CD8-positive, alpha-beta T cell (primary cell): ENCODE measurements at regions of chr6 and their contacts with region 1.

Region 1: GRCh38 chr6:166627033-166627874 is at the start of gene RPS6KA2:
- DNase-seq: peak; percentile 99 to 100 (median 100)
- ATAC-seq: peak; percentile 91
- H3K4me3 ChIP-seq: peak within 1 kb of the TSS; percentile 70 to 80
- H3K4me3 Mint-ChIP-seq: peak within 1 kb of the TSS; percentile 94
- H3K27ac ChIP-seq: peak within 1 kb of the TSS; percentile 32 to 54
- H3K27ac Mint-ChIP-seq: peak within 1 kb of the TSS; percentile 84
- H3K4me1 ChIP-seq: peaks cover 17% of the 10 kb centered on the region
- H3K4me1 Mint-ChIP-seq: peaks cover 17% of the 10 kb centered on the region
- H3K27me3 ChIP-seq: peaks cover 0 to 4% of the 10 kb centered on the region in 2 experiments
- H3K27me3 Mint-ChIP-seq: peaks cover 36% of the 10 kb centered on the region
- CTCF ChIP-seq: no peak
- total RNA-seq, gene RPS6KA2: 2.2 TPM

Region 2: DNA sequence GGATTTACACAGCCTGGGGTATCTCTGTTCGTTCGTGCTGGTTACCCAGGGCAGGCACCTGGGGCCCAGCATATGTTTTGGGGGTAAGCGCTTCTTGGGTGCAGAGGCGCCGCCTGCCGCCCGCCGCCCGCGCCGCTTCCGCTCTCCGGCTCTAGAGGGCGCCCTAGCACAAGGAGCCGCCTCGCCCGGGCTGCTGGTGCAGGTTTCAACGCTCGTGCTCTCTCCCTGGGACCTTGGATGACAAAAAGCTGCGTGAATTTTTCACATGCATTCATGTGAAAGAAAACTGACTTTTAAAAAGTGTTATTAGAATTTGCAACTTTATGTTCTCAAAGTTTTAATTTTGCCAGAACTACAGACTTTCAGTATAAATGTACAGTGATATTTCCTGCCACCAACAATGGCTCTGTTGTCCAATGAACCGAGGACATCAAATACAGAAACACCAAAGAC is 351.5 kb before region 1 on chr6:
- CTCF ChIA-PET with region 1: no interaction called
- POLR2A ChIA-PET with region 1: no interaction called
- intact Hi-C with region 1: loop called in 1 of 2 experiments (anchors 10 kb)
- DNase-seq: peak; percentile 74 to 90 (median 82)
- ATAC-seq: peak; percentile 97
- H3K4me3 ChIP-seq: no peak overlapping the region
- H3K4me3 Mint-ChIP-seq: no peak overlapping the region
- H3K27ac ChIP-seq: no peak overlapping the region
- H3K27ac Mint-ChIP-seq: no peak overlapping the region
- H3K4me1 ChIP-seq: peaks cover 4% of the 10 kb centered on the region
- H3K4me1 Mint-ChIP-seq: peaks cover 6% of the 10 kb centered on the region
- H3K27me3 ChIP-seq: peaks cover 0 to 3% of the 10 kb centered on the region in 2 experiments
- H3K27me3 Mint-ChIP-seq: peaks cover 2% of the 10 kb centered on the region
- CTCF ChIP-seq: peak; percentile 100

Region 3: GRCh38 chr6:166419286-166419685 is 208.0 kb before region 1 on chr6:
- CTCF ChIA-PET with region 1: no interaction called
- POLR2A ChIA-PET with region 1: interaction called, 3 read pairs
- intact Hi-C with region 1: loop called (anchors 1 to 2 kb)
- DNase-seq: peak in 8 of 9 experiments; percentile 50 to 82 (median 72)
- ATAC-seq: peak; percentile 35
- H3K4me3 ChIP-seq: no peak overlapping the region
- H3K4me3 Mint-ChIP-seq: peak overlapping the region; percentile 50
- H3K27ac ChIP-seq: peak overlapping the region; percentile 15 to 58
- H3K27ac Mint-ChIP-seq: peak overlapping the region; percentile 92
- H3K4me1 ChIP-seq: peaks cover 62% of the 10 kb centered on the region
- H3K4me1 Mint-ChIP-seq: peaks cover 75% of the 10 kb centered on the region
- H3K27me3 ChIP-seq: no peaks in the 10 kb centered on the region
- H3K27me3 Mint-ChIP-seq: no peaks in the 10 kb centered on the region
- CTCF ChIP-seq: no peak

Region 4: DNA sequence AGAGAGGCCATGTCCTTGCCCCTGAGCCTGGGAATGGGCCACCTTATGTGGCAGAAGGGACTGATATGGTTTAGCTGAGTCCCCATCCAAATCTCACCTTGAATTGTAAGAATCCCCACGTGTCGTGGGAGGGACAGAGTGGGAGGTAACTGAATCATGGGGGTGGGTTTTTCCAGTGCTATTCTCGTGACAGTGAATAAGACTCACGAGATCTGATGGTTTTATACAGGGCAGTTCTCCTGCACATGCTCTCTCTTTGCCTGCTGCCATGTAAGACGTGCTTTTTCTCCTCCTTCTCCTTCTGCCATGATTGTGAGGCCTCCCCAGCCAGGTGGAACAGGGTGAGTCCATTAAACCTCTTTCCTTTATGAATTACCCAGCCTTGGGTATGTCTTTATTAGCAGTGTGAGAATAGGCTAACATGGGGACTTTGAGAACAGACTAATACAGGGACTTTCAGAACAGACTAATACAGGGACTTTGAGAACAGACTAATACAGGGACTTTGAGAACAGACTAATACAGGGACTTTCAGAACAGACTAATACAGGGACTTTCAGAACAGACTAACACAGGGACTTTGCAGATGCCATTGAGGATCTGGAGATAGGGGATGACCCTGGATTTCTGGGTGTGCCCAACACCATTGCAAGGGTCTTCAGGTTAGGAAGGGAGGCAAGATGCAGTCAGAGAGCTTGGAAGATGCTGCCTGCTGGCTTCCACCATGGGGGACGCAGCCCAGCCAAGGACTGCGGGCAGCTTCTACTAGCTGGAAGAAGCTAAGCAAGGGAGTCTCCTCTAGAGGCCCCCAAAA is 127.7 kb before region 1 on chr6:
- CTCF ChIA-PET with region 1: no interaction called
- POLR2A ChIA-PET with region 1: no interaction called
- intact Hi-C with region 1: no loop called
- DNase-seq: no peak
- ATAC-seq: no peak
- H3K4me3 ChIP-seq: no peak overlapping the region
- H3K4me3 Mint-ChIP-seq: no peak overlapping the region
- H3K27ac ChIP-seq: no peak overlapping the region
- H3K27ac Mint-ChIP-seq: no peak overlapping the region
- H3K4me1 ChIP-seq: no peaks in the 10 kb centered on the region
- H3K4me1 Mint-ChIP-seq: peaks cover 6% of the 10 kb centered on the region
- H3K27me3 ChIP-seq: no peaks in the 10 kb centered on the region
- H3K27me3 Mint-ChIP-seq: no peaks in the 10 kb centered on the region
- CTCF ChIP-seq: no peak

Region 5: GRCh38 chr6:166540631-166541331 is 86.5 kb before region 1 on chr6:
- CTCF ChIA-PET with region 1: no interaction called
- POLR2A ChIA-PET with region 1: interaction called, 3 read pairs
- intact Hi-C with region 1: loop called in 1 of 2 experiments (anchors 1 kb)
- DNase-seq: peak; percentile 15 to 87 (median 47)
- ATAC-seq: peak; percentile 92
- H3K4me3 ChIP-seq: peak overlapping the region in 1 of 2 experiments; percentile 37
- H3K4me3 Mint-ChIP-seq: peak overlapping the region; percentile 78
- H3K27ac ChIP-seq: peak overlapping the region; percentile 45 to 61
- H3K27ac Mint-ChIP-seq: peak overlapping the region; percentile 84
- H3K4me1 ChIP-seq: peaks cover 9% of the 10 kb centered on the region
- H3K4me1 Mint-ChIP-seq: peaks cover 28% of the 10 kb centered on the region
- H3K27me3 ChIP-seq: no peaks in the 10 kb centered on the region
- H3K27me3 Mint-ChIP-seq: no peaks in the 10 kb centered on the region
- CTCF ChIP-seq: no peak

Region 6: GRCh38 chr6:166707045-166707444 is 79.8 kb after region 1 on chr6:
- CTCF ChIA-PET with region 1: no interaction called
- POLR2A ChIA-PET with region 1: no interaction called
- intact Hi-C with region 1: no loop called
- DNase-seq: peak in 1 of 9 experiments; percentile 13
- ATAC-seq: no peak
- H3K4me3 ChIP-seq: no peak overlapping the region
- H3K4me3 Mint-ChIP-seq: no peak overlapping the region
- H3K27ac ChIP-seq: no peak overlapping the region
- H3K27ac Mint-ChIP-seq: no peak overlapping the region
- H3K4me1 ChIP-seq: no peaks in the 10 kb centered on the region
- H3K4me1 Mint-ChIP-seq: no peaks in the 10 kb centered on the region
- H3K27me3 ChIP-seq: no peaks in the 10 kb centered on the region
- H3K27me3 Mint-ChIP-seq: peaks cover 10% of the 10 kb centered on the region
- CTCF ChIP-seq: no peak

Region 7: DNA sequence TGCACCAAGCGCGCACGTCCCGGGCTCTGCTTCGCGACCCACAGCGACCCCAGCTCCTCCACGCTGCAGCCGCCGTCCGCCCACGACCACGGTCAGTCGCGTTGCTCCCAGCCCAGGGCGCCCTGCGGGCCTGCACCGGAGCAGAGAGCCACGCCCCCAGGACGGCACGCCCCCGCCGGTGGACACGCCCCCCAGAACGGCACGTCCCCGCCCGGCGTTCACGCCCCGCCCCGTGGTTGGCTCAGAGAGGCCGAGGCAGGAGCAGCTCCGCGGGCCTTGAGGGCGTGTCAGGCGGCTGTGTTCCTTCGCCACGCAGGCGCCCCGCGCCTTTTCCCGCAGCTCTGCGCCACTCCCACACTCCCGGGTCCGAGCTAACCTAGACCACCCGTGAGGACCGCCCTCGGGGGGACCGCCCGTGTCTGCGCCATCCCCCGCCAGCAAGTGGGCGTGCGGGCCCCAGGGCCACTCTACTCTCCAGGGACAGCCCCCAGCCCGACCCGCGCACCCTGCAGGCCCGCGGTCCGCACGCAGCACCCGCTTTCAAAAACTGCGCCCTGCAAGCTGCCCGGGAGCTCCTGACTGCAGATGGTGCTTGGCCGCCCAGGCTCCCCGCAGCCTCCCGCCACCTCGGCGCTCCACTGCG is 329.3 kb after region 1 on chr6 and contains the start of gene RNASET2:
- CTCF ChIA-PET with region 1: no interaction called
- POLR2A ChIA-PET with region 1: no interaction called
- intact Hi-C with region 1: loop called (anchors 1 to 2 kb)
- DNase-seq: peak; percentile 96 to 100 (median 99)
- ATAC-seq: peak; percentile 87
- H3K4me3 ChIP-seq: peak within 1 kb of the TSS; percentile 74 to 75
- H3K4me3 Mint-ChIP-seq: peak within 1 kb of the TSS; percentile 93
- H3K27ac ChIP-seq: peak within 1 kb of the TSS; percentile 81 to 86
- H3K27ac Mint-ChIP-seq: peak within 1 kb of the TSS; percentile 98
- H3K4me1 ChIP-seq: peaks cover 68% of the 10 kb centered on the region
- H3K4me1 Mint-ChIP-seq: peaks cover 70% of the 10 kb centered on the region
- H3K27me3 ChIP-seq: no peaks in the 10 kb centered on the region
- H3K27me3 Mint-ChIP-seq: no peaks in the 10 kb centered on the region
- CTCF ChIP-seq: no peak
- total RNA-seq, gene RNASET2: 93.1 to 98.9 TPM

Region 8: DNA sequence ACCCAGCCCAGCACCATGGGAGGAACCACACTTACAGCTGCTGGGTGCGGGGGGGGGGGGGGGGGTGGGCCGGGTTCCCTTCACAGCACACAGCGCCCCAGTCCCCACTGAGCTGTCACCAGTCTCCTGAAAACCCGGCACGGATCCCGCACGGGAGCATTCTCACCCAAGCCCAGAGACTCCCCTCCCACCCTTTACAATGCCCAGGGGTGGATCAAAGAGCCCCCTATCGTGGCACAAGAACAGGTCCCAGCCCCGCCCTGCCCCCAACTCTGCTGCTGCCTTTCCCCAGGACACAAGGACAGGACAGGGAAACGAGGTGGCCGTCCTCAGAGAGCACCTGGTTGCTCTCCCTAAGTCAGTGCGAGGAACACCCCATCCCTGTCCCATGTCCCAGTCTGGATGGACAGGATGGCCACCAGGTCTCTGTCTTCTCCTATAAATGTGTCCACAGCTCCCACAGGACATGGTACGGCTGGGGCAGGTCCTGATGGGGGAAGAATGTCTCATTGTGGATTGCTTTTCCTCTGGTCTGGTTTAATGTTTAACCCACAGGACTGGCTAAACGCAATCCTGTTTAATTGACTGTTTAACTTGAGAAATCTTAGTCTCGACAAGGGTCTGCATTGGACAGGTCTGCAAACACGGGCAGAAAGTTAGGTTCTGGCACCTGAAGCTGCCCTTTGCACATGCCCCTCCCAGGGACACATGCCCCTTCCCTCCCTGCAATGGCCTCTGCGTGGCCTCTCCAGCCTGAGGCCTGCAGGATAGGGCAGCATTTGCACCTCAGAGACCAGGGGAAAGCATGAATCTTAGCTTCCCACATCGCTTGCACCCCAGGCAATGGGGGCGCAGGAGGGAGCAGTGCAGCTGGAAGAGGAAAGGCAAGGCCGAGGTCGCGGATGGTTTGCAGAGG is 1647.0 kb after region 1 on chr6:
- CTCF ChIA-PET with region 1: no interaction called
- POLR2A ChIA-PET with region 1: no interaction called
- intact Hi-C with region 1: no loop called
- DNase-seq: no peak
- ATAC-seq: no peak
- H3K4me3 ChIP-seq: no peak overlapping the region
- H3K4me3 Mint-ChIP-seq: no peak overlapping the region
- H3K27ac ChIP-seq: no peak overlapping the region
- H3K27ac Mint-ChIP-seq: no peak overlapping the region
- H3K4me1 ChIP-seq: no peaks in the 10 kb centered on the region
- H3K4me1 Mint-ChIP-seq: no peaks in the 10 kb centered on the region
- H3K27me3 ChIP-seq: peaks cover 0 to 4% of the 10 kb centered on the region in 2 experiments
- H3K27me3 Mint-ChIP-seq: peaks cover 13% of the 10 kb centered on the region
- CTCF ChIP-seq: no peak